Mammary epithelial cell (primary cell): ENCODE measurements at regions of chr12 and their contacts with region 1.

Region 1: DNA sequence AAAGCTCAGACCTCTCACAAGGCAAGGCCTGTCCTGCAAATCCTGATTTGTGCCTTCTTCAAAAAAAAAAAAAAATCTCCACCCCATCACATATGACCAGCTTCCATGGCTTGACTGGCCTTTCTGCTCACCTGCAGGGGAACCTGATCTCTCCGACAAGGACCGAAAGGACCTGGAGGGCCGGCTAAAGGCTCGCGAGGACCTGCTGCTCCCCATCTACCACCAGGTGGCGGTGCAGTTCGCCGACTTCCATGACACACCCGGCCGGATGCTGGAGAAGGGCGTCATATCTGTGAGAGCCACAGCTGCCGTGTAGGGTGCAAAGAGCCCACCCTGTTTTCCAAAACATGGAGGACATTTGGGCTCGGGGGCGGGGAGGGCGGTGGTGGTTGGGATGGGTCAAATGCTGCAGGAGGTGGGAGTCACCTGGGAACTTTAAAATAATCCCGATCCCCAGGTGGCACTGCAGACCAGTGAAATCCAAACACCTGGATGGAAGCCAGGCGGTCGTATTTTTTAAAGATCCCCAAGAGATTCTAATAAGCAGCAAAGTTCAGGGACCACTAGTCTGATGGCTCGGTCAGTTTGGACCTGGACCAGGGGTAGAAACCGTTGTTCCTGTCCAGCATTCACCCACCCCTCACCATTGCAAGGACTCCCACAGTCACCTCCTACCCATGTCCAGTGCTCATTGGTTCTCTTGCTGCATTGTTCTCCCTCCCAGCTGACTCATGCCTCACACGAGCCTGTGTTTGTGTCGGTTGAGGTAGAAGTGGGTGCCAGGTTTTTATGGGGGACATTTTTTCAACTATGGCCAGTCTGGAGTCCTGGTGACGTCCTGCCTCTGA is 44.8 kb downstream of the FOXN4 start:
- DNase-seq: peak; percentile 30
- H3K4me3 ChIP-seq: no peak overlapping the region
- H3K27ac ChIP-seq: no peak overlapping the region
- H3K4me1 ChIP-seq: no peaks in the 10 kb centered on the region
- H3K27me3 ChIP-seq: no peaks in the 10 kb centered on the region
- CTCF ChIP-seq: peak; percentile 58 to 82

Region 2: GRCh38 chr12:109110988-109111495 is 153.3 kb before region 1 on chr12:
- CTCF ChIA-PET with region 1: no interaction called
- dilution Hi-C with region 1: no loop called
- in situ Hi-C with region 1: no loop called
- intact Hi-C with region 1: loop called (anchors 5 kb)
- DNase-seq: peak; percentile 65
- H3K4me3 ChIP-seq: peak overlapping the region; percentile 23 to 52 (median 37)
- H3K27ac ChIP-seq: peak overlapping the region; percentile 33
- H3K4me1 ChIP-seq: peaks cover 11% of the 10 kb centered on the region
- H3K27me3 ChIP-seq: no peaks in the 10 kb centered on the region
- CTCF ChIP-seq: no peak

Region 3: DNA sequence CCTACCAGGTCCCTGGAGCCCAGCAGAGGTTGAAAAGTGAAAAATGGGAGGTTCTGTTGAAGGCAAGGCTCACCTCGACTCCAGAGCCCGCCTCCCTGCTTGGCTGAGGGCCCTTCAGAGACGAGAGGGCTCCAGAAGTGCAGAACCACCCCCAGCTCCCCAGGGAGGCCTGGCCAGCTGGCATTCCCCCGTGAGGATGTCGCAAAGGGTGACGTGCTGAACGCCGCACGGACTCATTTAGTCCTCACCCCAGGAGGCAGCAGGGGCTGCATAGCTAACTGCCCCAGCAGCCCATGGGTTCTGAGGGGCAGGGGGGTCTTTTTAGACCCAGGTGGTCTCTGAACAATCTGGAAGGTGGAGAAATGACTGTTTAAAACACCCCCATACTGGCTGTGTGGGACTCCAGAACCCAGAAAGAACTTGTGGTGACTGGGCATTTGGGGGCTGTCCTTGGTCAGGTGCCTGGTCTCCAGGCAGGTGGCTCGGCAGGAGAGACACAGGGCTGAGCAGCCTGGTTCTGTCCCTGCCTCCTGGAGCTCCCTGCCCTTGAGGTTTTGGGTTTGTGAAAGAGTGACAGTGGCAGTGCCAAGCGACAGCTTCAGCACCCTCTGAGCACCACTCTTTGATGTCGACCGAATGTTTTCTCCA is 1107.2 kb after region 1 on chr12:
- CTCF ChIA-PET with region 1: no interaction called
- dilution Hi-C with region 1: no loop called
- in situ Hi-C with region 1: no loop called
- intact Hi-C with region 1: no loop called
- DNase-seq: peak; percentile 29
- H3K4me3 ChIP-seq: no peak overlapping the region
- H3K27ac ChIP-seq: peak overlapping the region; percentile 27
- H3K4me1 ChIP-seq: peaks cover 25% of the 10 kb centered on the region
- H3K27me3 ChIP-seq: no peaks in the 10 kb centered on the region
- CTCF ChIP-seq: no peak